ENCODE measurements at regions of chr10 and their contacts with region 1.

Region 1: DNA sequence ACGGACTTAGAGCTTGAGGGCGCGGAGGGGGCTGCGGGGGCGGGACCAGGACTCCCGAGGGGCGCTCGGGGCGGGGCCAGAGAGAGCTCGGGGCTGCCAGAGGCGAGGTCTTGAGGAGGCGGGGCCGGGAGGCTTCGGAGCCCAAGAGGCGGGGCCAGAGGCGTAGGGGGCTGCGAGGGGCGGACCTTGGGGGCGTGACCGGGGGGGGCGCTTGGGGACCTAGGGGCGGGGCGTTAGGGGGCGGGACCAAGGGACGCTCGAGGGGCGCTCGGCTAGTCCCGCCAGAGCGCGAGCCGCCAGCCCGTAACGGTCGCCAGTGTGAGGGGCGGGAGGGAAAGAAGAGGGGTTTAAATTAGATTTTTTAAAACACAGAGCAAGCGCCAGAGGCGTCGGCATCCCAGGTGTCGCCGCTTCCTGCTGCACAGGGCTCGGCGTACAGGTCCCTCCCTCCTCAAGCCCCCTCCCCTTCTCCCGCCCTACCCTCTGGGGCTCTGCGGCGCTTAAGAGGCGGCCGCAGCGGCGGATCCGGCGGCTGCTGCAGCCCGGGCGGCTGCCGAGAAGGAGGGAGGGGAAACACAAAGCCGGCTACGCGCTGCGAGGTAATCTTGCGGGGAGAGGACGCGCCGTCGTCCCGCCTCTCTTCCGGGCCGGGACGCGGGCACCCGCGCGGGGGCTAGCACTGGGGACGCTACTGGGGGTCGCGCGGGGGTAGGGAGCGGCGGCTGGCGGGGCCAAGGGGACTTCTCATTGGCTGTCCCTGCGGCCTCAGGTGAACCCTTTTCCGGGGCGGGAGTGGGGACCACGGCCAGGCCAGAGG is at the start of gene ADD3:
- DNase-seq: no peak
- H3K4me3 ChIP-seq: peak within 1 kb of the TSS; percentile 74 to 99
- H3K27ac ChIP-seq: peak within 1 kb of the TSS; percentile 95
- H3K4me1 ChIP-seq: peaks cover 72% of the 10 kb centered on the region
- H3K27me3 ChIP-seq: no peaks in the 10 kb centered on the region
- CTCF ChIP-seq: no peak
- POLR2A ChIP-seq: peak in 1 of 2 donors; percentile 54
- total RNA-seq, gene ADD3: 114 TPM

Region 2: DNA sequence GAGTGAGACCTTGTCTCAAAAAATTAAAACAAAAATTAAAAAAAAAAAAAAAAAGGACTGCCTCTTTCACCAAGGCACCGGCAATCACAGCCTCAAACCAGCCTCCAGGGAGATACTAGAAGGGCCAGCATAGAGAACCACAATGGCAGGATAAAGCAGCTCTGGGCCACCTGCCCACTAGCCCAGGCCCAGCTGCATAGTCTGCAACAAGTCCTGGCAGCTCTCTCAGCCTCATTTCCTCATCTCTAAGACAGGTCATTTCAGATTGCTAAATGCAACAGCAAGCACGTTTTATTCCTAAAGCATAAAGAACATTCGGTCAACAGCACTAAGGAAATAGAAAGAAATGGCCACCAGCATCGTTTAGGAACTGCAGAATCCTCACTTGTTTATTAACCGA is 113.4 kb before region 1 on chr10:
- intact Hi-C with region 1: loop called (anchors 10 kb)
- DNase-seq: no peak
- H3K4me3 ChIP-seq: peak overlapping the region in 1 of 2 donors; percentile 0
- H3K27ac ChIP-seq: peak overlapping the region; percentile 72
- H3K4me1 ChIP-seq: peaks cover 68% of the 10 kb centered on the region
- H3K27me3 ChIP-seq: no peaks in the 10 kb centered on the region
- CTCF ChIP-seq: no peak
- POLR2A ChIP-seq: no peak

Measured in vagina (tissue), 2 donors.